ENCODE measurements at regions of chr1 and their contacts with region 1.

Region 1: DNA sequence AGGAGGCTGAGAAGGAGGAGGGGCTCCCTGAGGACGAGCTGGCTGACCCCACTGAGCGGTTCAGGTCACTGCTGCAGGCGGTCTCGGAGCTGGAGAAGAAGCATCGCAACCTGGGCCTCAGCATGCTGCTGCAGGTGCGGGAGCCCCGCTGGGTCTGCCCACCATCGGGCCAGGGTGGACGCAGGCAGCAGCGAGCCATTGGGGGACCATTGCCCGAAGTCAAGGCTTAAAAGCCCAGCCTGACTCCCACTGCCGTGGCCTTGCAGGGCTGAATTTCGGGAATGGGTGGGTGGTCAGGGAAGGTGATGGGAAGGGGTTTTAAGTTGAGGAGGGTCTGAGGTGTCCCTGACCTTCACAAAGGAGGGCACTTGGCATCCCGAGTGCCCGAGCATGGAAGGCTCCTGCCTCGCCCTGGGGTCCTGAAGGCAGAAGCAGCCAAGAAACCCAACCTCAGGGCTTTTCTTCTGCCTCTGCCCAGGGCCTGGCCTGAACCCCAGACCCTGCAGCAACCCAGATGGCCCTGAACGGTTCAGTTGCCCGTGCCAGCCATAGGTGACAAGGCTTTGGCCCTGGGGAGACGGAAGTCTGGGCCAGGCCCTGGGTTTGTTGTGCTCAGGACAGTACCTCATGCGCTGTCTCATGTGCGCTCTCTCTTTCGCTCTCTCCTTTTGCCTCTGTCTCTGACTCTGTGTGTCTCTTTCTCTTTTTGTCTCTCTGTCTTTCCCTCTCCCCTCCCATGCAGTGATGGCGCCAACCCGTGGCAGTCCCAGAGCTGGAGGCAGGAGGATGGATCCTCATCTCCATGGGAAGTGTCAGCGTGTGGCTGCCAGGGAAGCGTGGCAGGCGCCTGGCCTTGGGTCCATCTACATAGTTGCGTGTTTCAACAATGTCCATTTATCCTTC is 6.2 kb downstream of the RNF187 start:
- DNase-seq: no peak
- H3K4me3 ChIP-seq: no peak overlapping the region
- H3K27ac ChIP-seq: no peak overlapping the region
- H3K4me1 ChIP-seq: peaks cover 22% of the 10 kb centered on the region
- H3K27me3 ChIP-seq: no peaks in the 10 kb centered on the region
- CTCF ChIP-seq: no peak

Region 2: DNA sequence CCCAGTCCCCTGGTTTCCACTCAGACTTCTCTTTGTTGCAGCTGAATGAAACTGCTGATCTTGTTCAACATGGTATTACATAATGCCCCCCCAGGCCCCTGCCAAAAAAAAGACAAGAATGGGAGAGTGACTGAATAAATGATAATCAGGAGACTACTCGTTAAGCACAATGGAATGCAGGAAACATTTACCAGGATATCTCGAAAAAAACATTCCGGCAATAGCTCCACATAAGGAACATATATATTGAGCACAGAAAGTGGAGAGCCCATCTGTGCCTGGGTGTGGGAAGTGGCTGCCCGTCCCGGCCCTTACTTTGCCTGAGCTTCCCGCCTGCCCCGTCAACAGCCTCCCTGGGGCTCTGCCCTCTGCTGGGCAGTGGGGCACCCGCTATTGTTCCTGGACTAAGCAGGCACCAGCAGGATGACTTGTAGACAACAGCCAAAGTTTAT is 100.1 kb before region 1 on chr1:
- CTCF ChIA-PET with region 1: no interaction called
- POLR2A ChIA-PET with region 1: interaction called, 24 read pairs
- intact Hi-C with region 1: no loop called
- DNase-seq: peak; percentile 63 to 79
- H3K4me3 ChIP-seq: no peak overlapping the region
- H3K27ac ChIP-seq: peak overlapping the region; percentile 17; the same call in 1 of the 2 replicates
- H3K4me1 ChIP-seq: peaks cover 20% of the 10 kb centered on the region
- H3K27me3 ChIP-seq: no peaks in the 10 kb centered on the region
- CTCF ChIP-seq: peak; percentile 57; the same call in 1 of the 2 replicates

Region 3: GRCh38 chr1:228457017-228457395 is 36.4 kb before region 1 on chr1:
- CTCF ChIA-PET with region 1: no interaction called
- POLR2A ChIA-PET with region 1: no interaction called
- intact Hi-C with region 1: no loop called
- DNase-seq: no peak
- H3K4me3 ChIP-seq: peak overlapping the region; percentile 55
- H3K27ac ChIP-seq: peak overlapping the region; percentile 49
- H3K4me1 ChIP-seq: peaks cover 26% of the 10 kb centered on the region
- H3K27me3 ChIP-seq: no peaks in the 10 kb centered on the region
- CTCF ChIP-seq: no peak